HEK293T (cell line): ENCODE measurements at regions of chr2 and their contacts with region 1.

Region 1: DNA sequence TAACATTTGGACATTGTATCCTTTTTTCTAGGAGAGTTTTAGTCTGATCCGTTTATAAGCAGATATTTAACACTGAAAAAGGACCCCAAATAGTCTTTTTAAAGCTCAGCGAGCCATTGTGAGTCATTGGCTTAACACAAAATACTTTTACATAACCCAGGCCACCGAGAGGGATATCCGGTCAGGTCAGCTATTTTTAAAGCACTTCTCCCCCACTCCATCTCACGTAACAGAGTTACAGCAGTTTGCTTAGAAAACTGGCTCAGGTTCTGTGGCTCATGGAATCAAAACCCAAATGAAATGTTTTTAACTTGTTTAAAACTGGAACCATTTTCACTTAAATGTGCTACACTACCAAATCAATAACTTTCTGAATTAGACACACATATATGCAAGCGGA is 23.9 kb downstream of the COL4A3 start:
- DNase-seq: no peak

Region 2: GRCh38 chr2:227153766-227154486 is 34.4 kb before region 1 on chr2:
- CTCF ChIA-PET with region 1: no interaction called
- POLR2A ChIA-PET with region 1: no interaction called
- DNase-seq: no peak

Region 3: DNA sequence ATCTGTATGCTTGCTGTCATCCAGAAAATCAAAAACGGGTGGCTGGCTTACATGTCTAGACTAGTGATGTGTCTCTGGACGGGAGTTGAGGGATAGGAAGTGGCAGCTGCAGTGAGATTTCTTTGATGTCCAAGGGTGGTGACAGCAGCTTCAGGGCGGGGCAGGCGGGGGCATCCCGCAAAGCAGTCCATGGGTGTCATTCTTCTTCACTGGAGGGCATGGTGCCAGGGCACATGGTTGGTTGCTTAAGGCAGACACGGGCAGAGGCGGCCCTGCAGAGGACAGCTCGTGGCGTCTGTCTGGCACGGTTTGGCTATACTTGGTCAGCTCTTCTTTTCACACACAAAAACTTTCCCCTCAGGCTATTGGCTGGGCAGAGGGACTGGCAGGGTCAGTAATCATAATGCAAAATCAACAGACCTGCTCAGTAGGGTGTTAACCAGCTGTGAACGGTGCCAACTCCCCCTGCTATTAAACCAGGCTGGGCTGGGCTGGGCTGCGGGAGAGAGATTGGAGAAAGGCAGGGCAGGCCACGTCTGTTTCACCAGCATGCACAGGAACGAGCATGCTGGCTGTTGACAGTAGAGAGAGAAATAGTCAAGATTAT is 39.9 kb after region 1 on chr2:
- CTCF ChIA-PET with region 1: interaction called, 10 read pairs
- POLR2A ChIA-PET with region 1: no interaction called
- DNase-seq: no peak